ENCODE measurements at regions of chr6 and their contacts with region 1.

Region 1: GRCh38 chr6:24809728-24810127 is 11.0 kb upstream of the ARMH2 start:
- DNase-seq: no peak
- ATAC-seq: no peak
- H3K4me3 ChIP-seq: no peak overlapping the region
- H3K4me3 Mint-ChIP-seq: no peak overlapping the region
- H3K27ac ChIP-seq: peak overlapping the region in 1 of 2 experiments; percentile 22
- H3K27ac Mint-ChIP-seq: peak overlapping the region; percentile 69
- H3K4me1 ChIP-seq: no peaks in the 10 kb centered on the region
- H3K4me1 Mint-ChIP-seq: no peaks in the 10 kb centered on the region
- H3K27me3 ChIP-seq: no peaks in the 10 kb centered on the region
- H3K27me3 Mint-ChIP-seq: no peaks in the 10 kb centered on the region
- CTCF ChIP-seq: no peak

Region 2: GRCh38 chr6:22929311-22929985 is 1880.3 kb before region 1 on chr6:
- CTCF ChIA-PET with region 1: no interaction called
- POLR2A ChIA-PET with region 1: no interaction called
- intact Hi-C with region 1: no loop called
- DNase-seq: no peak
- ATAC-seq: no peak
- H3K4me3 ChIP-seq: no peak overlapping the region
- H3K4me3 Mint-ChIP-seq: no peak overlapping the region
- H3K27ac ChIP-seq: no peak overlapping the region
- H3K27ac Mint-ChIP-seq: no peak overlapping the region
- H3K4me1 ChIP-seq: no peaks in the 10 kb centered on the region
- H3K4me1 Mint-ChIP-seq: peaks cover 4% of the 10 kb centered on the region
- H3K27me3 ChIP-seq: no peaks in the 10 kb centered on the region
- H3K27me3 Mint-ChIP-seq: no peaks in the 10 kb centered on the region
- CTCF ChIP-seq: no peak

Region 3: DNA sequence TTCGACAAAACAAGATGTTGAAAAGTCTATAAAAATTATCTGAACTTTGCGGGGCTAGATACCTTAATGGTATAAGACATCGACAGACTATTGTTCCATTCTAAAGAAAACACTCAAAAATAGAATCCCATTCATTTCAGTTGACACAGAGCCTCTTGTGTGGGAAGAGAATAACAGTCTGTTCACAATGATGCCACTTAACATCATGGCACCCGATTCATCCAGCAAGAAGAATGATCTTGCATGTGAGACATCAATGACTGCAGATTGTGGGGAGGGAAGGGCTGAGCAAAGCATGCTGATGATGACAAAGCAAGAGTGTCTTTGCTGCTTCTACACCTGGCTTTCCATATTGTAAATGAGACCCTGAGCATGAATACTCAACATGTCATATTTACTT is 38.7 kb after region 1 on chr6:
- CTCF ChIA-PET with region 1: no interaction called
- POLR2A ChIA-PET with region 1: interaction called, 3 read pairs
- intact Hi-C with region 1: loop called in 1 of 2 experiments (anchors 5 kb)
- DNase-seq: no peak
- ATAC-seq: no peak
- H3K4me3 ChIP-seq: no peak overlapping the region
- H3K4me3 Mint-ChIP-seq: no peak overlapping the region
- H3K27ac ChIP-seq: no peak overlapping the region
- H3K27ac Mint-ChIP-seq: peak overlapping the region; percentile 87
- H3K4me1 ChIP-seq: peaks cover 12% of the 10 kb centered on the region
- H3K4me1 Mint-ChIP-seq: peaks cover 49% of the 10 kb centered on the region
- H3K27me3 ChIP-seq: no peaks in the 10 kb centered on the region
- H3K27me3 Mint-ChIP-seq: no peaks in the 10 kb centered on the region
- CTCF ChIP-seq: no peak

Region 4: DNA sequence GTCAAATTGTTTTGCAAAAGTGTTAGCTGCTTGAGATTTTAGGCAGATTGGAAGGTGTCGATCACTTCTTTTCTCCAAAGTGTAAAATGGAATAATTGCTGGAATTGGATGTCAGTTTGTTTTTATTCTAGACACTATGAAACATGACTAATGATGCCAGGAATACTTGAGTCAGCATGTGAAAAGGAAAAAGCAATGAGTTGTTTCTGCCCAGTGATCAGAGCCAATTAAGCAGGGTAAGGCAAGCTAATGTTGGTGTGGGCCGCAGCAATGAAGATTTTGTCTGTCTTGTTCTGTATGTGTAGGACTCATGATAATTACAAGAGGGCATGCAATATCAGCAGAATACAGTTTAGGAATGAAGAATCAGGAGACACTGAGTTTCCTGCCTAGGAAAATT is 579.7 kb after region 1 on chr6:
- CTCF ChIA-PET with region 1: no interaction called
- POLR2A ChIA-PET with region 1: no interaction called
- intact Hi-C with region 1: no loop called
- DNase-seq: no peak
- ATAC-seq: no peak
- H3K4me3 ChIP-seq: no peak overlapping the region
- H3K4me3 Mint-ChIP-seq: no peak overlapping the region
- H3K27ac ChIP-seq: no peak overlapping the region
- H3K27ac Mint-ChIP-seq: no peak overlapping the region
- H3K4me1 ChIP-seq: no peaks in the 10 kb centered on the region
- H3K4me1 Mint-ChIP-seq: peaks cover 22% of the 10 kb centered on the region
- H3K27me3 ChIP-seq: no peaks in the 10 kb centered on the region
- H3K27me3 Mint-ChIP-seq: no peaks in the 10 kb centered on the region
- CTCF ChIP-seq: no peak

Measured in CD8-positive, alpha-beta T cell (primary cell).